OCI-LY7 (cell line): ENCODE measurements at regions of chr17 and their contacts with region 1.

Region 1: GRCh38 chr17:42577532-42578281 is at the start of gene PSMC3IP:
- DNase-seq: peak; percentile 95
- H3K4me3 ChIP-seq: peak within 1 kb of the TSS; percentile 84
- H3K27ac ChIP-seq: peak within 1 kb of the TSS; percentile 93
- H3K4me1 ChIP-seq: peaks cover 48% of the 10 kb centered on the region
- CTCF ChIP-seq: peak; percentile 60; the same call in 1 of the 2 replicates
- total RNA-seq, gene PSMC3IP: 27.3 and 40.5 TPM in 2 replicates

Region 2: DNA sequence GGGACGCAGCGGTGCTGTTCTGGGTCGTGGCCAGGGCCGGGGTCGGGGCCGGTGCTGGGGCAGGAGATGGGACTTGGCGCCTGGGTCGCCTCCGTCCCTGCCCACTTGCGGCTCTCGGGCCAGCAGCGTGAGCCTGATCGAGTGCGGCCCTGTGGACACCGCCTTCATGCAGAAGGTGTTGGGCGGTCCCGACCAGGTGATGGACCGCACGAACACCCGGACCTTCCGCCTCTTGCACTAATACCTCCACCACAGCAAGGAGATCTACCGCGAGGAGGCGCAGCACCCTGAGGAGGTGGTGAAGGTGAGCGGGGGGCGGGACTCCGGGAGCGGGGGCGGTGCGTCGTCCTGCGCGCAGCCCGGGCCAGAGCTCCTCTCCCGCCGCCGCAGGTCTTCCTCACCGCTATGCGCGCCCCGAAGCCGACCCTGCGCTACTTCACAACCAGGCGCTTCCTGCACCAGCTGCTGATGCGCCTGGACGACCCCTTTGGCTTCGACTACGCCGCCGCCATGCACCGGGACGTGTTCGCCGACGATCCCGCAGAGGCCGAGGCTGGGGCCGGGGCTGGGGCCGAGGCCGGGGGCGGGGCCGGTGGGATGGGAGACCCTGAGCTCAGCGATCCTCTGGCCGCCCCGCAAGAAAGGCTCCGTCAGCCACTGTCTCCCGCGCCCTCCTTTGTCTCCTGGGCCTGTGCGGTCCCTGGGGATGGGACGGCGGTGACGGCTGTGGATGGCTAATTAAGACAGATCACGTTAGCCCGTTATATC is 29.5 kb before region 1 on chr17:
- CTCF ChIA-PET with region 1: no interaction called
- POLR2A ChIA-PET with region 1: no interaction called
- intact Hi-C with region 1: loop called (anchors 2 kb)
- DNase-seq: peak; percentile 84
- H3K4me3 ChIP-seq: peak overlapping the region; percentile 48
- H3K27ac ChIP-seq: no peak overlapping the region
- H3K4me1 ChIP-seq: peaks cover 8% of the 10 kb centered on the region
- CTCF ChIP-seq: peak; percentile 77

Region 3: DNA sequence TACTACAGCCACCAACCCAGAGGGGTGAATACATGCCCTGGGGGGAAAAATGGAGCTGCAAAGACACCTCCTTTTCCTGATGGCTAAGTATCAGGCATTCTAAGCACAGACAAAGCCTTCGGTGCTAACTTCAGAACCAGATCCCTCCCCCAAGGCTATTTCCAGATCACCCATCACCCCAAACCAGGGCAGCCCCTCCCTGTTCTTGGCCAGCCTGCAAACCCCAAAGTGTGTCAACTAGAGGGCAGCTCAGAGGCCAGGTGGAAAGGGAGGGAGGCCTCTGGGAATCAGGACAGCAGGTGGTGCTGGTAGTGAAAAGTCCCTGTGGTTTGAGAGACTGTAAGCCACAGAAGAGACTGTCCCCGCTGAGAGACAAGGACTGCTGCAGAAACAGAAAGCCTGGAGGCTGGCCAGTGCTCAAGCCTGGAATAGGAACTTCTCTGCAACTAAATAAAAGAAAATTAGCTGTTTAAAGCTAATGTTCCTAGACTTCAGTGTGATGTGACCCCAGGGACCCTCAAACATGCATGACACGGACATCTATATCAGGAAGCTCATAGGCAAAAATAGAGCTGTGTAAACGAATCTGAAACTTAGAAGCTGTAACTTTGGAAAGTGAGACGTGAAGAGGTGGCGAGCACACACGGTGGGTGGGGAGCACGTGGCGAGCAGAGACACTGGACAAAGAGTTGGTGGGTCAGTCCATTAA is 40.9 kb after region 1 on chr17:
- CTCF ChIA-PET with region 1: no interaction called
- POLR2A ChIA-PET with region 1: interaction called, 6 read pairs
- intact Hi-C with region 1: loop called (anchors 2 kb)
- DNase-seq: peak; percentile 50
- H3K4me3 ChIP-seq: no peak overlapping the region
- H3K27ac ChIP-seq: peak overlapping the region; percentile 60
- H3K4me1 ChIP-seq: peaks cover 27% of the 10 kb centered on the region
- CTCF ChIP-seq: peak; percentile 57

Region 4: DNA sequence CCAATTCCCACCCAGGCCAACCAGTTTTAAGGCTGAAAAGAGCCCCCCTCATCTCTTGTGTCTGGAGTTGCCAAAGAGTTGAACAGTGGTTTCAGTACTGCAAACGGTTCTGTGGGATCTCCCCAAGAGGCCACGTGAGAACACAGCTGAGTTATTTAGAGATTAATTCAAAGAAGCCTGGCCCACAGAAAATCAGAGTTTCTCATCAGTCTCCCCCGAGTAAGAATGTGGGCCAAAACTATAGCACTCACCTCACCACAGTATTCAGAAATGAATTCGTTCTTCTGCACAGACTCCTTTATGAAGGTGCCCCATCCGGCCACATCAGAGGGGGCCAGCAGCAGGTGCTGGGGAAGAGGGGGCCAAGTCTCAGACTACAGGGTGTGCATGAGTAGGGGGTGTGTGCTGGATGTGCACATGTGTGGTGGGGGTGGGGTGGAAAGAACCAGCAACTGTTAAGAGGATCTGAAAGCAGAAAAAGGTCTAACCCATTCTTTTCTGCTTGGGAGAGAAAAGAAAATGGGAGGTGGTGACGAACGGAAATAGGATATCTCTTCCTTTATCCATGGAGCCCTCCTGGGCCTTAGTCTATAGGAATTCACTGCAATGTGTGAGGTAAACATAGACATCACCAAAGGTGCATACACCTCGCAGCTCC is 127.3 kb after region 1 on chr17:
- CTCF ChIA-PET with region 1: no interaction called
- POLR2A ChIA-PET with region 1: no interaction called
- intact Hi-C with region 1: loop called (anchors 1 kb)
- DNase-seq: peak; percentile 43
- H3K4me3 ChIP-seq: no peak overlapping the region
- H3K27ac ChIP-seq: peak overlapping the region; percentile 50
- H3K4me1 ChIP-seq: peaks cover 14% of the 10 kb centered on the region
- CTCF ChIP-seq: no peak

Region 5: DNA sequence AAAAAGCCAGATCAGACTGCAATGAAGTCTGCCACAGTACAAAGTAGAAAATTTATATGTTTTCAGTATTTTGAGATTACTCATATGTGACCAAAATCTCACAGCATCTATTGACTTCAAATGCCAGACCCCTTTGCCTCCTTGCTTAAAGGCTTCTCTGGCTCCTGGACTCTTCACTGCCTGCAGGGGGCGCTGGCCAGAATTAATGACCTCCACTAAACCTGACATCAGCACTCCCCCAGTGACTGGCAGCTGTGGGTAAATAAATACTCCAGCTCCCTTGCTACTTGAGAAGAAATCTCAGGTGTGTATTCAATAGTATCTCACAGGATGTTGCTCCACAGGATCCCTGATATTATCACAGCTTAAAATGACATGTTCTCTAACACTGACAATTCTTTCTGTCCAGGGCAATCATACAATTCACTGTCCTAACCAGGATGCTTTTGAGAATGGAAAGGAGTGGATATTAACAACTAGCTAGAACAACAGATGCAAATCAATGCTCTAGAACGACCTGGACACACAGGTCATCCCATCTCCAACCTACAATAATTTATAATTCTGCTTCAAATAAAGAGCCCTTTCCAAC is 242.3 kb after region 1 on chr17:
- CTCF ChIA-PET with region 1: no interaction called
- POLR2A ChIA-PET with region 1: interaction called, 3 read pairs
- intact Hi-C with region 1: loop called (anchors 10 kb)
- DNase-seq: peak; percentile 80
- H3K4me3 ChIP-seq: no peak overlapping the region
- H3K27ac ChIP-seq: no peak overlapping the region
- H3K4me1 ChIP-seq: peaks cover 20% of the 10 kb centered on the region
- CTCF ChIP-seq: peak; percentile 98

Region 6: GRCh38 chr17:43134774-43135453 is 557.2 kb after region 1 on chr17:
- CTCF ChIA-PET with region 1: no interaction called
- POLR2A ChIA-PET with region 1: no interaction called
- intact Hi-C with region 1: no loop called
- DNase-seq: no peak
- H3K4me3 ChIP-seq: no peak overlapping the region
- H3K27ac ChIP-seq: peak overlapping the region; percentile 21
- H3K4me1 ChIP-seq: peaks cover 89% of the 10 kb centered on the region
- CTCF ChIP-seq: no peak